Activated CD4-positive, alpha-beta T cell treated with anti-CD3 and anti-CD28 coated beads, Interleukin-2, amount 10 ng/mL, durations not matched to agents 24 days and 14 days (primary cell): ENCODE measurements at regions of chr3 and their contacts with region 1.

Region 1: DNA sequence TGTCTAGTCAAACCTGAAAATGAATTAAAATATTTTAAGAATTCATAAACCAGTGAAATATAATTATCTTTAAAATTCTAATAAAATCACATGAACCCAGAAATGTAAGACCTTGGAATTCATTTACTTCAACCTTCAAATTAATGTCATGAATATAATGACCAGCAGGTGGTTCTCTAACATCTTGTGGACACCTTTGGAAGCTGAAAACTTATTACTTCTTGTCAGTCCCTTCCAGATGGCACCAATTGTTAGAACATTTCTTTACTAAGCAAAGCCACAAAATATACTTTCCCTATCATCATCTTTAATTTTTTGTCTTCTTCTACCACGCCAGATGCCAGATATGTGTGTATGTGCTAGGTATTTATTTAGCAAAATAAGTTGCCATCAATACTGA is 240.0 kb downstream of the MBNL1 start:
- DNase-seq: no peak
- H3K4me3 Mint-ChIP-seq: no peak overlapping the region
- H3K27ac Mint-ChIP-seq: no peak overlapping the region
- H3K4me1 Mint-ChIP-seq: peaks cover 32% of the 10 kb centered on the region
- H3K27me3 Mint-ChIP-seq: peaks cover 10% of the 10 kb centered on the region

Region 2: GRCh38 chr3:152524198-152525140 is 15.8 kb after region 1 on chr3:
- intact Hi-C with region 1: loop called (anchors 1 kb)
- DNase-seq: peak; percentile 85
- H3K4me3 Mint-ChIP-seq: no peak overlapping the region
- H3K27ac Mint-ChIP-seq: no peak overlapping the region
- H3K4me1 Mint-ChIP-seq: no peaks in the 10 kb centered on the region
- H3K27me3 Mint-ChIP-seq: peaks cover 1% of the 10 kb centered on the region